ENCODE measurements at regions of chr12 and their contacts with region 1.

Region 1: DNA sequence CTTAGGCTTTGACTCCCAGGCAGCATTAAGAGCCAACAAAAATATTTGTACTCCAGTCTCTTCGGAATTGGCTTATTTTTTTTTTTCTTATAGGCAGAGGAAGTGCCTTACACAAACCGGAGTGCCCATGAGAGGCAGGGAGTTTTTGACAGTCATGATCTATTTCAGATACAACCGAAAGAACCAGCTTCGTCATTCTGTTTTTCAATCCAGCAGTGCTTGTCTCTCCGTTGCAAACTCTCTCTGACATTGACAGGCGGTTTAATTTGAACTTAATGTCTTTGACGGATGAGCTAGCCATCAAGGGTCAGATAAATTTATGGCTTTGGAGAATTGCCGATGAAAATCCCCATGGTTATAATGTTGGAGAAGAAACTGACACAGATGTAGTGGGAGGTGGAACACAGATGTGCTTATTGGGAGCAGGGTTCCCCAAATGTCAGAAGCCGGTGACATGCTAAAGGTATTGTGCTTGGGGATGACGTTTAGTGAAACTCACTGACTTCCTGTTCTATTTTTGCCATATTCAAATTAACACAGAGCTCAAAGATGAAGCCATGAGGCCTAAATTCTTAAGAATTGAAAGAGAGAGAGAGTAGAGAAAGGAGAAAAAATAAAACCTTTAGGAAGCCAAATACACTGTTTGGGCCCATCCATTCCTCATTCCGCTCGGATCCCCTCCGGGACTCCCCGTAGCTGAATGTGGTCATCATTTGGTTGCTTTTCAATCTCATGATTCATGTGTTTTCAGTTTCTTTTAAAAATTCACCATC is 59.7 kb downstream of the PLXNC1 start:
- DNase-seq: peak; percentile 46
- H3K4me3 Mint-ChIP-seq: peak overlapping the region; percentile 79
- H3K27ac Mint-ChIP-seq: peak overlapping the region; percentile 100
- H3K4me1 Mint-ChIP-seq: peaks cover 73% of the 10 kb centered on the region
- H3K27me3 Mint-ChIP-seq: no peaks in the 10 kb centered on the region

Region 2: DNA sequence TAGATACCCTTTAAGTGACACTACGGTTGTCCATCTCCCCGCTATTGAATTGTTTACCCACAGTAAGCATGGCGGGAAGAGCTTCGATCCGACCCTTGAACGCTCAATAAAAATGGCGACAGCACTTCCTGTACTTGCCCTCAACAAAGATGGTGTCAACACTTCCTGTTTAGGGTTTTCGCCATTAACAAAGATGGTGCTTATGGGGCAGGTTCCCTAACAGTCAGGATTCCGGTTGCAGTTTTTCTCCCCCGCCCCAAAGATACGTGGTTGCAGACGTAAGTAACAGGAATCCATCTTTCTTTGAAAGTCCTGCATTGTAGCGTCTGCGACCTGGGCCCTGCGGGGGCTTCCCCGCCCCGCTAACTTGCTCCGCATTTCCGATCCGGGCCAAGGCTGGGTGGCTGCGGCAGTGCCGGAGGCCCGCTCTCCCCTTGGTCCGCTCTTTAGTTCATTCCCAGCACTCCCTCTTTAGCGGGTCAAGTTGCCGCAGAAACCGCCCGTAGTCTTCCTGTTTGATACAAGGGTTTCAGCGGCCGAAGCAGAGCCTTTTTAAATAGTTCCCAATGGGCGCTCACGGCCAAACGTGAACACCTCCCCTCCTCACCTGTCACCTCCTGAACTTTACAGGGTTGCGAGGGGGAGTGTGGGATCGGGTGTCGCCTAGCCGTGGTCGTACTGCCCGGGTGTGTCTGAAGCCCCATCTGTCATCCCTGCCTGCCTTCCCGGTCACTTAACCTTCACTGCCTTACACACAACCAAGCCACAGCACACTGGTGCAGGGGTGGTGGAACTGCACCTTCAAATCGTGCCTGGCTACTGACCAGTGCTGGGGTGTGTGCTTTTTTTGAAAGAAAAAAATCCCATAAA is 530.6 kb before region 1 on chr12 and contains the start of gene CRADD:
- intact Hi-C with region 1: loop called (anchors 1 kb)
- DNase-seq: peak; percentile 86
- H3K4me3 Mint-ChIP-seq: peak within 1 kb of the TSS; percentile 85
- H3K27ac Mint-ChIP-seq: peak within 1 kb of the TSS; percentile 96
- H3K4me1 Mint-ChIP-seq: peaks cover 38% of the 10 kb centered on the region
- H3K27me3 Mint-ChIP-seq: no peaks in the 10 kb centered on the region
- total RNA-seq, gene CRADD: 11.2 and 12.3 TPM in 2 replicates

Region 3: GRCh38 chr12:94172973-94173372 is 35.1 kb before region 1 on chr12:
- intact Hi-C with region 1: loop called (anchors 1 kb)
- DNase-seq: no peak
- H3K4me3 Mint-ChIP-seq: no peak overlapping the region
- H3K27ac Mint-ChIP-seq: no peak overlapping the region
- H3K4me1 Mint-ChIP-seq: peaks cover 66% of the 10 kb centered on the region
- H3K27me3 Mint-ChIP-seq: peaks cover 2% of the 10 kb centered on the region

Region 4: DNA sequence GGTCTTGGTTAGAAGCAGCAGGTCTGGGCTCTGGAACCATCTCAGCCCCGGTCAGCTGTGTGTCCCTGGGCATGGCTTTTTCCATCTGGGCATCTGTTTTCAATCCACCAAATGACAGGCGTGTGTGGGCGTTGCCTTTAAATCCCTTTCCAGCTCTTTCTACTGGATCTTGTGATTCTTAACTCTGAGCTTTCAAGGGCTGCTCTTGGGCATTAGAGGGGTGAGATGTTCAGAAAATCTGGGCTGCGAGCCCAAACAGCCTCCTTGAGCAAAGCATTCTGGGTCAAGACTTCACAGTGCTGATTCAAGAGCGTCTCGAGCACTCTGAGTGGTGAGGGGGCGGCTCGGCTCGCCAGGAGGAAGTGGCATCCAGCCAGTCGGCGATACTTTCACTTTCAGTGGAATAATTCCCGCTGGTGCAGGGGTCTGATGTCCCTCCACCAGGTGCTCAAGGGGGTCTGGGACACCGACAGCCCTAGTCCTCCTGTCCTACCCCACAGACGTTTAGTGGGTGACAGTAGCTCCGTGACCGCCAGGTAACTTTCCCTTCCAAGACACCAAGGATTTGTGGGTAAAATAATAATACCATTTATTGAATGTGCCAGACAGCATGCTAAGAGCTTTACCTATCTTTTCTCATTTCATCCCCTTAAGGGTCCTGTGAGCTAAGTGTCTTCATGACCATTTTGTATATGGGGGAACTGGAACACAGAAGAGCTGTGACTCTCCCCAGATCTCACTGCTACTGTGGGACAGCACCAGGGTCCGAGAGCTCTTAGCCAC is 54.4 kb after region 1 on chr12:
- intact Hi-C with region 1: loop called (anchors 1 kb)
- DNase-seq: peak; percentile 56
- H3K4me3 Mint-ChIP-seq: peak overlapping the region; percentile 84
- H3K27ac Mint-ChIP-seq: peak overlapping the region; percentile 96
- H3K4me1 Mint-ChIP-seq: peaks cover 55% of the 10 kb centered on the region
- H3K27me3 Mint-ChIP-seq: no peaks in the 10 kb centered on the region

Region 5: DNA sequence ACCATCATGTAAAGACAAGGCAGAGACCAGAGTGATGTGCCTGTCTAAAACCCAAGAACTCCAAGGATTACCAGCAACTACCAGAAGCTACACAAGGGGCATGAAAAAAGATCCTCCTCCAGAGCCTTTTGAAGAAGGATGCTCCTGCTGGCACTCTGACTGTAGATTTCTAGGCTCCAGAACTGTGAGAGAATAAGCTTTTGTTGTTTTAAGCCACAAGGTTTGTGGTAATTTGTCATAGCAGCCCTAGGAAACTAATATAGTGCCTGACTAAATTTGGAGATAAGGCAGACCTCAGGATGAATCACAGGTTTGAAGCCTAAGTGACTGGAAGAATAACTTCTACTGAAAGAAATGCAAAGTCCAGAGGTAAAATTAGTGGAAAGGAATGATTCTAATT is 118.7 kb after region 1 on chr12:
- intact Hi-C with region 1: loop called (anchors 1 kb)
- DNase-seq: no peak
- H3K4me3 Mint-ChIP-seq: no peak overlapping the region
- H3K27ac Mint-ChIP-seq: peak overlapping the region; percentile 51
- H3K4me1 Mint-ChIP-seq: peaks cover 29% of the 10 kb centered on the region
- H3K27me3 Mint-ChIP-seq: no peaks in the 10 kb centered on the region

Region 6: GRCh38 chr12:94459728-94460615 is 251.9 kb after region 1 on chr12 and contains the start of gene CEP83:
- intact Hi-C with region 1: loop called (anchors 1 kb)
- DNase-seq: peak; percentile 98
- H3K4me3 Mint-ChIP-seq: peak within 1 kb of the TSS; percentile 93
- H3K27ac Mint-ChIP-seq: peak within 1 kb of the TSS; percentile 95
- H3K4me1 Mint-ChIP-seq: peaks cover 28% of the 10 kb centered on the region
- H3K27me3 Mint-ChIP-seq: peaks cover 6% of the 10 kb centered on the region
- total RNA-seq, gene CEP83: 37.7 and 40.0 TPM in 2 replicates

Region 7: DNA sequence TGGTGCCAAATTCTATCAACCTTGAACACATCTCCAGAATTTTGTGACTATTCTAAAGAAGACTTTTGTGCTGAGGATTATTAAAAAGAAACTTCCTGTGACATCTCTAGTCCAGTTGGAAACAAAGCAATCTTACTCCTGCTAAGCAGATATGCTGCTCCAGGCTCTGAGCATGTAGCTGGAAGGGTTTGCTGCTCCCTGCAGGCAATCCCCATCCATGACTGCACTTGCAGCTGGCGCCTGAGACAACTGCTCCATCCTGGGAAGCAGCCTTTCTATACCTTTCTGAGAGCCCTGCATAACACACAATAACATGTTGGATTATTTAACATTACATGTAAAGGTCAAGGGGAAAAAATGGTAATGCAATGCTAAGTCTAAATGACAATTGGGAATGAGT is 690.4 kb after region 1 on chr12:
- intact Hi-C with region 1: no loop called
- DNase-seq: no peak
- H3K4me3 Mint-ChIP-seq: no peak overlapping the region
- H3K27ac Mint-ChIP-seq: no peak overlapping the region
- H3K4me1 Mint-ChIP-seq: no peaks in the 10 kb centered on the region
- H3K27me3 Mint-ChIP-seq: peaks cover 11% of the 10 kb centered on the region